AG04449 (cell line): ENCODE measurements at regions of chr12 and their contacts with region 1.

Region 1: GRCh38 chr12:14995583-14996425 is 23.0 kb downstream of the PDE6H start:
- DNase-seq: peak; percentile 28
- H3K4me3 ChIP-seq: no peak overlapping the region
- CTCF ChIP-seq: peak; percentile 25

Region 2: DNA sequence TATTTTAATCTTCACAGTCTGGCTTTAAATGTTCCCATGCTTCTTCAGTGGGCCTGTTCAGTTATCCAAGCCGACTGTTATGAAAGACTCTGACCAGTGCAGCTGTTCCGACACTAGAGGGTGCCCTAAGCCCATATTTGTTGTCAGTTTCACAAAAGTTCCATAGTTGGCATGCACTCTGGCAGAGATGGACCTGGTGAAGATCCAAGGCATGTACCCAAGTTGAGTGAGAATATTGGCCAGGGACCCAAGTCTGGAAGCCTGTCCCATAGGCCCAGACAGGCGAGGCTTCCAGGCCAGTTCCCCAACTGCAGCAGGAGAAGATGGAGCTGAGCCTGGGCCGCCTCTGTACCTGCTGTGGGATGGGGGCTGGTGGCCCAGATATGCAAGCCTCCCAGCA is 272.0 kb before region 1 on chr12:
- CTCF ChIA-PET with region 1: interaction called, 19 read pairs
- POLR2A ChIA-PET with region 1: no interaction called
- DNase-seq: no peak
- H3K4me3 ChIP-seq: no peak overlapping the region
- CTCF ChIP-seq: peak; percentile 63

Region 3: GRCh38 chr12:14803011-14803829 is 192.6 kb before region 1 on chr12 and contains the starts of genes C12orf60 and WBP11:
- CTCF ChIA-PET with region 1: interaction called, 22 read pairs
- POLR2A ChIA-PET with region 1: no interaction called
- DNase-seq: peak; percentile 97
- H3K4me3 ChIP-seq: peak within 1 kb of the TSS; percentile 98
- CTCF ChIP-seq: no peak

Region 4: DNA sequence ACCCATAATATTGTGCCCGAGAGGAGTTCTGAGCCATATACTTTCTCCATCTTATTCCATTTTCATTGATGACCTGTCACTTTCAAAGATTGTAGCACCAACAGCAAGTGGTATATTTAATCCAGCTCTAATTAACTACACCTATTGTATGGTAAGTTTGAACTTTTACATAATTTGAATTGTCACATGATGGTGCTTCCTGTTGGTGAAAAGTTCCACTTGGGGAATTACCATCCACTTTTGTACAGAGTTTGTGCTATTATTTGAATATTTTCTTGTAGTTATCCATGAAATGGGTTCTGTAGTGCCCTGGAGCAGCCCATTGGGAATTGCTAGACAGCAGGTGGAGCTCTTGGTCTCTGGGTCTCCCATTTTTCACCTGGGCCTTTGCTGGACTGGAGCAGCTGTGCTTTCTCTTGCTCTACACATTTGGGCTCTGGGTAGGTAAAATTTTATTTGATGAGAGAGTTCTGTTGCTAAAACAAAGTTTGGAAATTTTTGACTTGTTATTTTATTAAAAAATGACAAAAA is 184.8 kb before region 1 on chr12:
- CTCF ChIA-PET with region 1: interaction called, 96 read pairs
- POLR2A ChIA-PET with region 1: no interaction called
- DNase-seq: no peak
- H3K4me3 ChIP-seq: no peak overlapping the region
- CTCF ChIP-seq: peak; percentile 42

Region 5: DNA sequence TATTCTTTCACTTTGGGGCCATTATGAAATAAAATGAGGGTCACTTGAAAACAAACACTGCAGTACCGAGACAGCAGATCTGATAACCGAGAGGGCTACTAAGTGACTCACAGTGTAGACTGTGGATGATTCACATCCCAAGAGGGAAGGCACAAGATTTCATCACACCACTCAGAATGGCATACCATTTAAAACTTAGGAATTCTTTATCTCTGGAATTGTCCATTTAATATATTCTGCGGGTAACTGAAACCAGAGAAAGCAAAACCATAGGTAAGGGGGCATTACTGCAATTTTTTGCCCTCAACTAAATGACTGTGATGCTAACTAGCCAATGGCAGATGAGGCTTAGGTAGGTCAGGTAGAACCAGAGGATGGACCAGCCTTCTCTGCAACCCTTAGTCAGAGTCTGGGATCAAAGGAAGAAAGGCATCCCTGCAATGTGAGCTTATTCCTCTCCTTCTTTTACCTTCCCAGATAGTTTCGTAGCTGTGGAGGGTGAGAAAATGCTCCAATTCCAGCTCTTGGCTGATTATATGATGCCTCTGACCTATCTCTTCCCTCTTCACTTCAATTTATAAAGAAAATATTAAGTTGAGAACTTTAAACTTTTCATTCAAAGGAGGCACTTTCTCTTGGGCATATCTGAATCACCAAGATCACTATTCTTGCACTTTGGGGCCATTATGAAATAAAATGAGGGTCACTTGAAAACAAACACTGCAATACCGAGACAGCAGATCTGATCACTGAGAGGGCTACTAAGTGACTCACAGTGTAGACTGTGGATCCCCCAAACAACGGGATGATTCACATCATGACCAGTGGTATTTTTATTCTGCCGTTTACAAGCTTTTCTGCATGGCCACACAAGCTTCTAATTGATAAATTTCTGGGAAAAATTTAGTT is 159.2 kb before region 1 on chr12:
- CTCF ChIA-PET with region 1: interaction called, 179 read pairs
- POLR2A ChIA-PET with region 1: no interaction called
- DNase-seq: peak; percentile 67
- H3K4me3 ChIP-seq: no peak overlapping the region
- CTCF ChIP-seq: no peak

Region 6: GRCh38 chr12:14845350-14845750 is 150.5 kb before region 1 on chr12:
- CTCF ChIA-PET with region 1: interaction called, 179 read pairs
- POLR2A ChIA-PET with region 1: no interaction called
- DNase-seq: no peak
- H3K4me3 ChIP-seq: no peak overlapping the region
- CTCF ChIP-seq: peak; percentile 56

Region 7: GRCh38 chr12:15020156-15020555 is 24.4 kb after region 1 on chr12:
- CTCF ChIA-PET with region 1: no interaction called
- POLR2A ChIA-PET with region 1: no interaction called
- DNase-seq: no peak
- H3K4me3 ChIP-seq: no peak overlapping the region
- CTCF ChIP-seq: no peak

Region 8: DNA sequence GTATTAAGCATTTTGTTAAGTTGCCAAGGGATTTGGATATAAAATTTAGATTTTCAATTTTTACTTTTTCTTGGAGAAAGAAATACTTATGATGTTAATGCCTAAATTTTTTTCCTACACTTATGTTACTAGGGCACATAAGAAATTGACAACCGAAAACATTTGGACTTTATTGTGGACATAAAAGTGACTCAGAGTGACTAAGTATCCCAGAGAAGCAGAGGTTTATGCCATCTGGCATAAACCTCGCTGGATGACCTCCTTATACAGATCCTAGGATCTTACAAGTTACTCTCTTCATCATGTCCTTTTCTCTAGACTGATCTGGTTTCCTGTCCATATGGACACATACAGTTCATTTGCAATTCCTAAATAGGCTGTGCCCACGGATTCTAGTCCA is 135.6 kb after region 1 on chr12:
- CTCF ChIA-PET with region 1: no interaction called
- POLR2A ChIA-PET with region 1: no interaction called
- DNase-seq: no peak
- H3K4me3 ChIP-seq: no peak overlapping the region
- CTCF ChIP-seq: no peak